ENCODE measurements at regions of chr17 and their contacts with region 1.

Region 1: DNA sequence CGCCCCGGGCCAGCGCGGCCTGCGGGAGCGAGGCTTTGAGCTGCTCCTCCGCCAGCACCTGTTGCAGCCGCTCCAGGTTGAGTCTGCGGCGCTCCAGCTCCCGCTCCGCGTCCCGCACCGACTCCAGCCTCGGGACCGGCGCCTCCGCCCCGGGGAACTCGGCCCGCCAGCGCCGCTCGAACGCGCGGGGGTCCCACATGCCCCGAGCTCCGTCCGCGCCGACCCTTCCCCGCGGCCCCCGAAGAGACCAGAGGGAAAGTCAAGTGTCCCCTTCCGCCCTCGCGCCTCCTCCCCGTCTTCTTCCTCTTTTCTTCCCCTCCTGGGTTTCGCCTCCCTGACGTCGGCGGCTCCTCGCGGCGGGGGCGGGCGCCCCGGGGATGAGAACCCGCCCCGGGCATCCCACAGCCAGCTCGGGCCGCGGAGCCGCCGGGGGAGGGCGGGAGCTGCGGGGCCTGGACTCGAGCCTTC is 40.8 kb upstream of the BHLHA9 start:
- DNase-seq: peak; percentile 80 to 88 (median 87)
- H3K4me3 ChIP-seq: peak overlapping the region; percentile 40 to 86 (median 59)
- H3K4me3 Mint-ChIP-seq: peak overlapping the region; percentile 78
- H3K27ac ChIP-seq: peak overlapping the region; percentile 20 to 90
- H3K27ac Mint-ChIP-seq: peak overlapping the region in 6 of 7 donors; percentile 62 to 86 (median 72)
- H3K4me1 ChIP-seq: peaks cover 42 to 50% of the 10 kb centered on the region in 2 donors
- H3K4me1 Mint-ChIP-seq: peaks cover 44% of the 10 kb centered on the region
- H3K27me3 ChIP-seq: no peaks in the 10 kb centered on the region
- H3K27me3 Mint-ChIP-seq: peaks cover 4 to 15% (median 13%) of the 10 kb centered on the region in 3 donors
- CTCF ChIP-seq: no peak

Region 2: GRCh38 chr17:1197781-1198490 is 31.5 kb before region 1 on chr17:
- intact Hi-C with region 1: loop called in 1 of 2 experiments (anchors 5 kb)
- DNase-seq: peak; percentile 94 to 95 (median 94)
- H3K4me3 ChIP-seq: peak overlapping the region in 2 of 3 experiments; percentile 7 to 59
- H3K4me3 Mint-ChIP-seq: peak overlapping the region; percentile 56 to 72
- H3K27ac ChIP-seq: peak overlapping the region; percentile 92 to 93
- H3K27ac Mint-ChIP-seq: peak overlapping the region; percentile 90 to 96 (median 94)
- H3K4me1 ChIP-seq: peaks cover 76 to 99% of the 10 kb centered on the region in 2 donors
- H3K4me1 Mint-ChIP-seq: peaks cover 89% of the 10 kb centered on the region
- H3K27me3 ChIP-seq: no peaks in the 10 kb centered on the region
- H3K27me3 Mint-ChIP-seq: no peaks in the 10 kb centered on the region
- CTCF ChIP-seq: no peak

Region 3: GRCh38 chr17:1203111-1203966 is 26.1 kb before region 1 on chr17:
- intact Hi-C with region 1: loop called in 1 of 2 experiments (anchors 2 kb)
- DNase-seq: peak; percentile 81 to 94 (median 89)
- H3K4me3 ChIP-seq: peak overlapping the region; percentile 45 to 79 (median 48)
- H3K4me3 Mint-ChIP-seq: peak overlapping the region; percentile 77 to 84
- H3K27ac ChIP-seq: peak overlapping the region; percentile 43 to 81
- H3K27ac Mint-ChIP-seq: peak overlapping the region in 6 of 7 donors; percentile 53 to 85 (median 70)
- H3K4me1 ChIP-seq: peaks cover 78 to 97% of the 10 kb centered on the region in 2 donors
- H3K4me1 Mint-ChIP-seq: peaks cover 83% of the 10 kb centered on the region
- H3K27me3 ChIP-seq: no peaks in the 10 kb centered on the region
- H3K27me3 Mint-ChIP-seq: peaks cover 0 to 1% (median 0%) of the 10 kb centered on the region in 3 donors
- CTCF ChIP-seq: no peak

Measured in CD14-positive monocyte (primary cell).